Right cardiac atrium (tissue), 5 donors: ENCODE measurements at regions of chr3 and their contacts with region 1.

Region 1: GRCh38 chr3:33426068-33426467 is 14.1 kb downstream of the UBP1 start:
- DNase-seq: no peak
- ATAC-seq: no peak
- H3K4me3 ChIP-seq: no peak overlapping the region
- H3K27ac ChIP-seq: no peak overlapping the region
- H3K4me1 ChIP-seq: peaks cover 2% of the 10 kb centered on the region
- H3K27me3 ChIP-seq: no peaks in the 10 kb centered on the region

Region 2: DNA sequence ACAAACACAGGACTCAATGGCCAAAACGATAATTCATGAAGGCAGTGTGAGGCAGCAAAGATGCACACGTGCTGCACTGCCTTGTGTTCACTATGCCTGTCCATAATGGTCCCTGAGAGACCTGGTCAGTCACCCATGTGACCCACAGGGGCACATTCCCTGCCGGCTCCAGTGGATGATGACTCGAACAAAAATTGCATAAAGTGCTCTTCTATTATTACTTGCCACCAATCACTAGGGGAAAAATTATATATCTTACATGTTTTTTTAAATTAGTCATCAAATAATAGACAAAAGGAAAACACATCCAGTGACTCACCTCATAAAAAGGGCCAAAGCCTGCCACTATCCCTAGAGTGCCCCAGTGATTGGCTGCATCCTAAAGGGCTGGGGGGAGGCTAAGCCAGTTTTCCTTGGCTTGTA is 33.4 kb before region 1 on chr3:
- intact Hi-C with region 1: loop called in 1 of 4 experiments (anchors 5 kb)
- DNase-seq: no peak
- ATAC-seq: peak in 1 of 2 donors; percentile 45
- H3K4me3 ChIP-seq: no peak overlapping the region
- H3K27ac ChIP-seq: no peak overlapping the region
- H3K4me1 ChIP-seq: peaks cover 3% of the 10 kb centered on the region
- H3K27me3 ChIP-seq: no peaks in the 10 kb centered on the region